GM12878 (cell line): ENCODE measurements at regions of chr7 and their contacts with region 1.

Region 1: GRCh38 chr7:114759347-114760062 is 162.4 kb upstream of the MDFIC start:
- DNase-seq: no peak
- ATAC-seq: peak; percentile 51
- H3K4me3 ChIP-seq: no peak overlapping the region
- H3K27ac ChIP-seq: no peak overlapping the region
- H3K4me1 ChIP-seq: no peaks in the 10 kb centered on the region
- H3K27me3 ChIP-seq: no peaks in the 10 kb centered on the region
- CTCF ChIP-seq: no peak
- EP300 ChIP-seq: no peak
- POLR2A ChIP-seq: no peak
- RAD21 ChIP-seq: no peak

Region 2: GRCh38 chr7:114784746-114785145 is 25.2 kb after region 1 on chr7:
- CTCF ChIA-PET with region 1: interaction called, 3 read pairs
- POLR2A ChIA-PET with region 1: no interaction called
- RAD21 ChIA-PET with region 1: interaction called, 4 read pairs
- SMC1A ChIA-PET with region 1: interaction called, 13 read pairs
- in situ Hi-C with region 1: no loop called
- intact Hi-C with region 1: no loop called
- DNase-seq: no peak
- ATAC-seq: no peak
- H3K4me3 ChIP-seq: no peak overlapping the region
- H3K27ac ChIP-seq: no peak overlapping the region
- H3K4me1 ChIP-seq: no peaks in the 10 kb centered on the region
- H3K27me3 ChIP-seq: no peaks in the 10 kb centered on the region
- CTCF ChIP-seq: no peak
- EP300 ChIP-seq: no peak
- POLR2A ChIP-seq: no peak
- RAD21 ChIP-seq: no peak

Region 3: DNA sequence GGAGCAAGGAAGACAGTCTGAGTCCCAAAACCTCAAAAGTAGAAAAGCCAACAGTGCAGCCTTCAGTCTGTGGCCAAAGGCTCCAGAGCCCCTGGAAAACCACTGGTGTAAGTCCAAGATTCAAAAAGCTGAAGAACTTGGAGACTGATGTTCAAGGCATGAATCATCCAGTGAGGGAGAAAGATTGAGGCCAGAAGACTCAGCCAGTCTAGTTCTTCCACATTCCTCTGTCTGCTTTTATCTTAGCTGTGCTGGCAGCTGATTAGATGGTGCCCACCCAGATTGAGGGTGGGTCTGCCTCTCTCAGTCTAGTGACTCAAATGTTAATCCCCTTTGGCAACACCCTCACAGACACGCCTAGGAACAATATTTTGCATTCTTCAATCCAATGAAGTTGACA is 142.3 kb after region 1 on chr7:
- CTCF ChIA-PET with region 1: no interaction called
- POLR2A ChIA-PET with region 1: no interaction called
- RAD21 ChIA-PET with region 1: no interaction called
- SMC1A ChIA-PET with region 1: no interaction called
- in situ Hi-C with region 1: no loop called
- intact Hi-C with region 1: no loop called
- DNase-seq: no peak
- ATAC-seq: no peak
- H3K4me3 ChIP-seq: no peak overlapping the region
- H3K27ac ChIP-seq: no peak overlapping the region
- H3K4me1 ChIP-seq: no peaks in the 10 kb centered on the region
- H3K27me3 ChIP-seq: no peaks in the 10 kb centered on the region
- CTCF ChIP-seq: no peak
- EP300 ChIP-seq: no peak
- POLR2A ChIP-seq: no peak
- RAD21 ChIP-seq: no peak